ENCODE measurements at regions of chr1 and their contacts with region 1.

Region 1: DNA sequence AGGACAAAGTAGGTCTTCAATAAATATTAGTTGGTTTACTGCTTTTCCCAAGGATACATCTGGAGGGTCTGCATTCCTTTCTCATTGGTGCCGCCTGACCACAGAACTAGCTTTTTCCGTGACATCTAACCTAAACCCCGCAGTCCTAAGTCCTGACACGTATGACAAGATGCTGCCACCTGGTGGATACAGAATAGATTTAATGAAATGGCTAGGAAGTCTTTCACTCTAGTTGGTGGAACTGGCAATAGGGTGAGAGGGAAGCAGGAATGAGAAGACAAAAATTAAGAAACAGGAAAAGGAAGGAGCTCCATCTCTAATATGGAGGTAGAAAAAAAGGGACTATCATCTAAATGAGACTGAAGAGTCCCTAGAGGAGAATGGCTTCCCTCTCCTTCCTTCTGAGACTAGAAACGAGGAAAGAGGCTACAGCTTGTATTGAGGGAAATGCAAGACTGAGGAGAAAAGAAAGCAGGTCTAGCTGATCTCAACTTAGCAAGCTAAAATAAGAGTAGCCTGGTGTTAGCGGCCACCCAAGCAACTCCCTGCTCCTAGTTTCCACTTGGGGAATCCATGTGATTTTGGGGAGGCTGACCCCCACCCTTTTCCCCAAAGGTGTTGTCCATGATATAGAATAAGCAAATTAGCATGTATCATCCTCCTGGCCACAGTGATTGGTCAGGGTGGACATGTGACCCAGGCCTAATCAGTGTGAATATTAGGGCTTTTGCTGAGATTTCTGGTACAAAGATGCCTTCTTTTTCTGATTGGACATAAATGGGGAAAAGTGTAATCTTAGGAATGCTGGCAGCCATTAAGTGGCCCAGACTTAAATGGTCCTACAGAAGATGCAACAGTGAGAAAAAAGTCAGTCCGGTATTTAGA is 5.9 kb downstream of the RFX5 start:
- DNase-seq: no peak
- H3K4me3 ChIP-seq: no peak overlapping the region
- H3K27ac ChIP-seq: no peak overlapping the region
- H3K4me1 ChIP-seq: peaks cover 7% of the 10 kb centered on the region
- H3K27me3 ChIP-seq: no peaks in the 10 kb centered on the region
- CTCF ChIP-seq: peak; percentile 56 to 77 (median 73)
- POLR2A ChIP-seq: no peak

Region 2: DNA sequence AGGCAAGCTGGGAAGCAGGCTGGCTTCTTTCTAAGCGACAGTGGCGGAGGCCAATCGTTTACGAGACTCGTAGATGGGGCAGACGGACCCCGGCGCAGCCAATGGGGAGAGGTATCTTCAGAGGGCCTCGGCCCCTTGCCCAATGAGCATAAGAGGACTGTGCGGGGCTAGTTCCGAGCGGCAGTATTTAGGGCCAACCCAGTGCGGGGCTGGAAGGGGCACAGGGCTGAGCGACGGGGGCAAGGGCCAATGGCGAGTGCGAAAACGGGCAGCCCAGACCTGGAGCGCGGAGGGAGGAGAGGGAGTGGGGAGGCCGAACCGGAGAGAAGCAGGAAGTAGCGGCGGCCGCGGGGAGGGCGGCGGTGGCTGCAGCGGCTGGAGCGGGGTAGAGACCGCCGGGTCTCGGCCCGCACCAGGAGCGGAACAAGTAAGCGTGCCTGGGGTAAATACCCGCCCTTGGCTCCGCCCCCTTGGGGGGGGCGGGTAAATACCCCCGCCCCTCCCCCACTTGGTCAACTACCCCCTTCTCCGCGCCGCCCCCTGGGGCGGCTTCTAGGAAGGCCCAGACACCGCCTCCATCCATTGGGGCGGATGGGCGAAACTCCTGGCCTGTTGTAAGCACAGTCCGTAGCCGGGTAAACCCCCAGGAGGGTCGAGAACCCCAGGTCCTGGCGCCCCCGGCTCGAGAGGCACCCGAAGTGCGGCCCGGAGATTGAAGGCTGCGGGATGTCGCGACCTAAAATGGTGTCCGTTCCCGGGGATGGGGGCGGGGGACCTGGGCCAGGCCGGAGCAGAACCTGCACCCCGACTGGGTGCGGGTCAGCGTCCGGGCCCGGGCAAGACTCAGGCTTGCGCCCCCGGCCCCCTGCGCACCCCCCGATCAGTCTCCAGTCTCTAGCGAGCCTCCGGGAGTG is 58.9 kb before region 1 on chr1 and contains the start of gene ZNF687:
- intact Hi-C with region 1: loop called (anchors 5 kb)
- DNase-seq: peak; percentile 100
- H3K4me3 ChIP-seq: peak within 1 kb of the TSS; percentile 52 to 81
- H3K27ac ChIP-seq: peak within 1 kb of the TSS; percentile 96
- H3K4me1 ChIP-seq: peaks cover 23% of the 10 kb centered on the region
- H3K27me3 ChIP-seq: no peaks in the 10 kb centered on the region
- CTCF ChIP-seq: no peak
- POLR2A ChIP-seq: peak in 1 of 2 donors; percentile 71
- total RNA-seq, gene ZNF687: 26.8 TPM

Region 3: DNA sequence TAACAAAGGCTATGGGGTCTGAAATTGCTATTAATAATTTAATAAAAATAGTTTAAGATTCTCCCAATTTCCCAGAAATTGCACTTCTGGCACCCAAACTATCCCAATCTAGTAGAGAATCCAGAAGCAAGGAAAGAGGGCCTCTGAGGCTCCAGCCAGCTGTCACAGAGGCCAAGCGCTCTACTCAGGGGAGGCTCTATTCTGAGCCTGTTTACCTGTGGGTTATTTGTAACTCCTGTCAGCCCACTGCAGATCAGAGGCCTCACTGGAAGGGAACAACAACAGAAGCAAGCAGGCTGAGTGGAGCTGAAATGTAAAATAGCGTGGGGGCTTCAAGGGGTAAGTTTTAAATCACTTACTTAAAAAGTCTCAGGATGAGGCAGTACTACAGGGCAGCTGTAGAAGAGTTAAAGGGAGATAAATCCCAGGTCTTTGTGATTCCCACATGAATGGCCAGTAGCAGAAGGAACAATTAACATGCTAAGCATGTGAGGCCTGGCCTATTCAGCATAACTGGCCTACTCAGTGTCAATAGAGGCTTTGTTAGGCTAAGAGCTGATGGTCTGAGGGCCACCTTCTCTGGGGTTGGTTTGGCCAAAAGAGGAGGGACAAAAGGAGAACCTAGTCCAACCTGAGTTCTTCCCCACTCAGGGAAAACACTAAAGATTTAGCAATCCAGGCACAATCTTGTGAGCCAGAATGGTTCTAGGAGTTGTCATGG is 46.2 kb before region 1 on chr1:
- intact Hi-C with region 1: loop called (anchors 2 kb)
- DNase-seq: no peak
- H3K4me3 ChIP-seq: no peak overlapping the region
- H3K27ac ChIP-seq: no peak overlapping the region
- H3K4me1 ChIP-seq: no peaks in the 10 kb centered on the region
- H3K27me3 ChIP-seq: no peaks in the 10 kb centered on the region
- CTCF ChIP-seq: no peak
- POLR2A ChIP-seq: no peak

Region 4: GRCh38 chr1:151399890-151400495 is 58.9 kb after region 1 on chr1:
- intact Hi-C with region 1: loop called (anchors 5 kb)
- DNase-seq: no peak
- H3K4me3 ChIP-seq: peak overlapping the region; percentile 50 to 100
- H3K27ac ChIP-seq: peak overlapping the region; percentile 95
- H3K4me1 ChIP-seq: peaks cover 22% of the 10 kb centered on the region
- H3K27me3 ChIP-seq: no peaks in the 10 kb centered on the region
- CTCF ChIP-seq: no peak
- POLR2A ChIP-seq: no peak

Region 5: DNA sequence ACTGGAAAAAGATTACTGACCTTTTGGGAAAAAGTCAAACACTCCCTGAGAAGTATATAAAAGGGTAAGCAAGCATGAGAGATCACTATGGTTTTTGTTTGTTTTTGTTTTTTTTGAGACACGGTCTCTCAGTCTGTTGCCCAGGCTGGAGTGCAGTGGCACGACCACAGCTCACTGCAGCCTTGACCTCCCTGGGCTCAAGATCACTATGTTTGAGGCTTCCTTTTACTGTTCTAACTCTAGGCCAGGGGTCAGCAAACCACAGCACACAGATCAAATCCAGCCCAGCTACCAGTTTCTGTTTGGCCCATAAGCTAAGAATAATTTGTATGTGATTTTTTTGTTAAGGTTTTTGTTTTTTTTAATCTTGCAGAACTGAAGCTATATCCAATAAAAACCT is 84.0 kb after region 1 on chr1:
- intact Hi-C with region 1: no loop called
- DNase-seq: no peak
- H3K4me3 ChIP-seq: no peak overlapping the region
- H3K27ac ChIP-seq: no peak overlapping the region
- H3K4me1 ChIP-seq: no peaks in the 10 kb centered on the region
- H3K27me3 ChIP-seq: no peaks in the 10 kb centered on the region
- CTCF ChIP-seq: no peak
- POLR2A ChIP-seq: no peak

Measured in vagina (tissue), 2 donors.